ENCODE measurements at regions of chr14 and their contacts with region 1.

Region 1: DNA sequence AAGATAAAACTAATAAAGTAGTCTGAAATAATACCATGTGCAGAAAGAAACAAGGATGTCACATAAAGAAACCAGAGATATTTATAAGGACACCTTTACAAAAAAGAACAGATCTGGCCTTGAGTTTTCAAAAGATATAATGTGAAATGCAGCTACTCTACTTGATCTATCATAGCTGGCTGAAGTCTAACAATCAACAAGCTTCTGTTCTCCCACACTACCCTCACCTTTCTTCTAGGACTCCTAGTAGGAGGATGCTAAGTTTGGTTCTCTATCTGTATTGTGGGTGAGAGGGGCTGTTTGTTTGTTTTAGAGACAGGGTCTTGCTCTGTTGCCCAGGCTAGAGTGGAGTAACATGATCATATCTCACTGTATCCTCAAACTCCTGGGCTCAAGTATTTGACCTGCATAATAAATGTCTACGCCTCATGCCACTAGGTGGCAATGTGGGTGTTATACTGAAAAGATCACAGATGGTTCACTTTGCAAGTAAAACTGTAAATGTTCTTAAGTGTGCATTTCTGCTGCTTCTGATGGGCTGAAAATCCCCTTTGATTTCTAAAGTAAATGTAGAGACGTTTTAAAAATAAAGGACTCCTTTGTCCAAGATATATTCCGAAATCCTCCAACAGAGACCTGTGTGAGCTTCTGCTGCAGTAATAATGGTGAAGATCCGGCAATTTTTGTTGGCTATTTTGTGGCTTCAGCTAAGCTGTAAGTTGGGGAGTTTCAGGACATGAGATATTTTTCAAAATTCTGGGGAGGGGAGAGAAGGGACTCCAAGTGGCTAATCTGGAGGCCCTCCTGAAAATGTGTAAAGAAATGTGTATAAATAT is 269.3 kb downstream of the DAD1 start:
- DNase-seq: peak; percentile 9
- H3K4me3 Mint-ChIP-seq: peak overlapping the region; percentile 56
- H3K27ac Mint-ChIP-seq: peak overlapping the region; percentile 80
- H3K4me1 Mint-ChIP-seq: no peaks in the 10 kb centered on the region
- H3K27me3 Mint-ChIP-seq: no peaks in the 10 kb centered on the region

Region 2: GRCh38 chr14:22251090-22251489 is 68.7 kb before region 1 on chr14:
- CTCF ChIA-PET with region 1: no interaction called
- POLR2A ChIA-PET with region 1: no interaction called
- intact Hi-C with region 1: no loop called
- DNase-seq: no peak
- H3K4me3 Mint-ChIP-seq: no peak overlapping the region
- H3K27ac Mint-ChIP-seq: no peak overlapping the region
- H3K4me1 Mint-ChIP-seq: no peaks in the 10 kb centered on the region
- H3K27me3 Mint-ChIP-seq: no peaks in the 10 kb centered on the region

Region 3: GRCh38 chr14:22375321-22375930 is 55.7 kb after region 1 on chr14:
- CTCF ChIA-PET with region 1: interaction called, 3 read pairs
- POLR2A ChIA-PET with region 1: no interaction called
- intact Hi-C with region 1: loop called (anchors 5 kb)
- DNase-seq: no peak
- H3K4me3 Mint-ChIP-seq: no peak overlapping the region
- H3K27ac Mint-ChIP-seq: no peak overlapping the region
- H3K4me1 Mint-ChIP-seq: no peaks in the 10 kb centered on the region
- H3K27me3 Mint-ChIP-seq: no peaks in the 10 kb centered on the region

Measured in activated CD4-positive, alpha-beta memory T cell treated with anti-CD3 and anti-CD28 coated beads for 36 hours (primary cell).